ENCODE measurements at regions of chr10 and their contacts with region 1.

Region 1: DNA sequence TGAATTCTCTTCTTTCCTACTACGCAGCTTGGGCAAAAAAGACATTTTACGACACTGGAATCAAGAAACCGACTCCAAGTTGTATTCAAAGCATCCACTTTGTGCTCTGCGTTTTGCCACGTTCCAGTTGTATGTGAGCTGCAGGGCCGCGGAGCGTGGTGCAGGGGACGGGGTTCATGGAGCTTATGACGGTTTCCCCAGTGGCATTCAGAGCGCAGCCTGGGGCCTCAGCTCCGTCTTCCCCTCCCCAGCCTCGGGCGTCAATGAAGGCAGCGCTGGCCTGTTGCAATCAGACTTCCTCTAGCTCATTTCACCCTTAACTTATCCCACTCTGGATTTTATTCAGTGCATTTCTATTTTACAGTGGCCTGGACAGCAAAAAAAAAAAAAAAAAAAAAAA is 403.4 kb upstream of the KLF6 start:
- DNase-seq: no peak
- H3K4me3 ChIP-seq: no peak overlapping the region
- H3K27ac ChIP-seq: no peak overlapping the region
- H3K4me1 ChIP-seq: no peaks in the 10 kb centered on the region
- H3K27me3 ChIP-seq: no peaks in the 10 kb centered on the region
- CTCF ChIP-seq: no peak

Region 2: GRCh38 chr10:4398602-4399001 is 210.2 kb after region 1 on chr10:
- CTCF ChIA-PET with region 1: interaction called, 14 read pairs
- POLR2A ChIA-PET with region 1: no interaction called
- intact Hi-C with region 1: no loop called
- DNase-seq: no peak
- H3K4me3 ChIP-seq: no peak overlapping the region
- H3K27ac ChIP-seq: no peak overlapping the region
- H3K4me1 ChIP-seq: no peaks in the 10 kb centered on the region
- H3K27me3 ChIP-seq: no peaks in the 10 kb centered on the region
- CTCF ChIP-seq: no peak

Measured in PC-9 (cell line).